HAP-1 (cell line): ENCODE measurements at regions of chr12 and their contacts with region 1.

Region 1: GRCh38 chr12:69900720-69901131 is 75.7 kb downstream of the MYRFL start:
- DNase-seq: peak; percentile 58 to 85
- H3K4me3 ChIP-seq: no peak overlapping the region
- H3K4me1 ChIP-seq: no peaks in the 10 kb centered on the region
- H3K27me3 ChIP-seq: no peaks in the 10 kb centered on the region

Region 2: DNA sequence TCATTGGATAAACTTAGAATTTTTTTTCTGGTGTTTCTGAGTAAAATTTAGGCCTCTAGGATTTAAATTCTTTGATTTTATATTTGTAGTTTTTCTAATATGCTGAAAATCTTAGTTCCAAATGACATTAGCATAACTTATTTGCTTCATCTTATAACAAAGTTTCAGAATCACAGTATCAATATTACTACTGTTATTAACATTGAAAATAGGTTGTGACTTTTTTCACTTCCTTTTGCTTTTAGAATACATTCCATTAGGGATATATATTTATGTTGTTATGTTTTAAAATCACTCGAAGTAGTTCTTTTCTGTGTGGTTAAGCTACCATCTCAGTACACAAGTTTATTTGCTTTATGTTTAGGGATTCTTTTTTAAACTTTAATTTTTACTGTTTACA is 149.2 kb before region 1 on chr12:
- in situ Hi-C with region 1: no loop called
- DNase-seq: no peak
- H3K4me3 ChIP-seq: no peak overlapping the region
- H3K4me1 ChIP-seq: no peaks in the 10 kb centered on the region
- H3K27me3 ChIP-seq: no peaks in the 10 kb centered on the region

Region 3: GRCh38 chr12:69978020-69978419 is 77.3 kb after region 1 on chr12:
- in situ Hi-C with region 1: no loop called
- DNase-seq: peak in 1 of 2 experiments; percentile 11
- H3K4me3 ChIP-seq: no peak overlapping the region
- H3K4me1 ChIP-seq: peaks cover 7% of the 10 kb centered on the region
- H3K27me3 ChIP-seq: no peaks in the 10 kb centered on the region

Region 4: DNA sequence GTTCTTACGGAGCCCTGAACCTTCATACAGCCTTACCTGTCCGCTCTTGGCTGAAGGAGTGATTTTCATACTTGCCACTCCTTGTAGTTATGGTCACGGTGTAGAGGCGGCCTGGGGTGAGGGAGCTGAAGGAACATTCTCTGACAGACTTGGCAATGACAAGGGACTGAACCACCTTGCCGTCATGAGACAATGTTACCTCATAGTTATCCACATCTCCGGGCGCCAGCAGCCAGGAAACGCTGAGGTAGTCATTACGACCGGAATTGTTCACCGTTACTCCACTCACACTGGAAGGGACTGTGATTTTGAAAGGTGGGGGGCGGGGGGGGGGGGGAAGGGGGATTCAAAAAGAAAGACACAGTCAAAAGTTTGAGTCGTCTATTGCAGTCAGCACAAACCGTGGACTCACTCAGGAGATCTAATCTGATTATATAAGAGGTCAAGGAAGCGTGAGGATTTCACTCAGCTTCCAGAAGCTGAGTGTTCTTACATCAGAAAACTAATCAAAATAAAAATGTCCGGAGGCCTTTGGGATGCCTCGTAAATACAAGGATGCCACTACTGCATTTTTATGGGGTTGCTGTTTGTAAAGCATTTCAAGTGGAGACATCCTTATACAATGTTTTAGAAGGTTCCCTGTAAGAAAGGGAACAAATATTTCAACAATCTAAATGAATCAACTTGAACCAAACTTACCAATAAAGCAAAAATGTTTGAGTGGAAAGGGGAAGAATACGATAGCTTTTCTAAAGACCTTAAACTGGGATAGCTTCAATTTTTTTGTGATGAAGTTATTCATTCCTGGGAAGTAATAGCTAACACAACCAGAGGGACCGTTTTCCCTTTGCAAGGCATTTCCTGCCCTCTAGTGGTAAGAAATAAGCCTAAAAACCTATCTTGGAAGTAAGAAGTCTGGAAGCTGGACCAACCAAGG is 675.9 kb after region 1 on chr12:
- in situ Hi-C with region 1: loop called (anchors 10 kb)
- DNase-seq: peak; percentile 25 to 72
- H3K4me3 ChIP-seq: no peak overlapping the region
- H3K4me1 ChIP-seq: no peaks in the 10 kb centered on the region; the same call in 1 of the 2 replicates
- H3K27me3 ChIP-seq: no peaks in the 10 kb centered on the region

Region 5: DNA sequence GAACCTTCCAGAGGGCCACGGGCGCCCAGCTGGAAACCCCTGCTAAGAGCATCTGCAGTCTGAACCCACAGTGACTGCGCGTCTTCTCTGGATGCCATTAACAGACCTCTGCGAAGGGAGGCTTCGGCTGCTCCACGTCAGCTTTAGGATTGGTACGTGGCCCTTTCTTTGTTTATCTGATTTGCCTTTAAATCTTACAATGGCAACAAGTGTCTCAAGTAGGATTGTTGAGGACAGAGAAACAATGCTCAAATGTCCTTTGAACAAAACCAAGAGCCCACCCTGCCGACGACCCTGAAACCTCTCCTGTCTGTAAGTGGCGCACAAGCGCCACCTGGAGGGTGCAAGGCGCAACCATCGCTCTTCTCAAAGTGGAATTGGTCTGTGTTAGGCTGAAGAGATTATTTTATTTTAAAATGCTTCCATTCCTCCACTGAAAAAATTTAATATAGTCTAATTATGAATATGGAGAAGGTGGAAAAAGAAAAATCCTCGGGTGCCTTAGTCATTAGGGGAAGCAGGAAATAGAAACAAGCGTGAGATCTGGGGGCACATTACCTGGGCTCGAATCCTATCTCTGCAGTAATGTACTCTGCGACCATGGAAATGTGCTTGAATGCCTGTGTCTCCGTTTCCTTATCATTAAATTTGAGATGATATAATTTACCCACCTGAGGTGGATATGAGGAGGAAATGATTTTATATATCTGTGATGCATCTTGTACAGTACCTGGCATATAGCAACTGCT is 819.1 kb after region 1 on chr12:
- in situ Hi-C with region 1: loop called (anchors 10 kb)
- DNase-seq: peak; percentile 47 to 71
- H3K4me3 ChIP-seq: peak overlapping the region; percentile 26
- H3K4me1 ChIP-seq: no peaks in the 10 kb centered on the region; the same call in 1 of the 2 replicates
- H3K27me3 ChIP-seq: no peaks in the 10 kb centered on the region